ENCODE measurements at regions of chr15 and their contacts with region 1.

Region 1: DNA sequence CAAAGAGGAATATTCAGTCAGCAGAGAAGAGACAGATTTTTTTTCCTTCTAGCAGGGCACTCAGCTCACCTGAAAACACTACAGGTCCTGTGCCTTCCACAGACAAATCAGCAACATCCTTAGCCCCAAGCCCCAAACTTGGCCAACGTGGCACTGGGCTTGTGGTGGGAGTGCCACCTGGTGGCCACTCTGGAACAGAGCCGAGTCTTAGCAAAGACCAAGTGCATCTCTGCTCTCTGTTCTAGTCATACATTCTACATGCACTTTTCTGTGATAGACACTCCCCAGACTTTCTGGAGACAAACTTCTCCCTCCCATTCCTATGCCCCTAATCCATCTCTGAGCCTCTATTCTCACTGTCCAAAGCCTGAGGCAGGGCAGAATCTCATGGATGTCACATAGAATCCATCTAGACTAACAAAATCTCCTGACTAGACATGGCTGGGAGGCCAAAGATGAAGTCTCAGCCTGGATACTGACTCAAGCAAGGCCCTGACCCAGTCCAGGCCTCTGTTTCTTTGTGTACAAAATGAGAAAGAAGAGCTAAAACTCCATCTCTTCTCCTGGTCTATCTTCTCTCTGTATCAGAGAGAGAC is 5.1 kb upstream of the SEMA7A start:
- DNase-seq: peak; percentile 62 to 84 (median 65)
- H3K4me3 ChIP-seq: no peak overlapping the region
- H3K4me3 Mint-ChIP-seq: peak overlapping the region in 1 of 7 donors; percentile 71
- H3K27ac ChIP-seq: no peak overlapping the region
- H3K27ac Mint-ChIP-seq: peak overlapping the region in 4 of 8 donors; percentile 7 to 64 (median 27)
- H3K4me1 ChIP-seq: peaks cover 12% of the 10 kb centered on the region
- H3K4me1 Mint-ChIP-seq: peaks cover 14 to 26% (median 19%) of the 10 kb centered on the region in 3 donors
- H3K27me3 ChIP-seq: no peaks in the 10 kb centered on the region
- H3K27me3 Mint-ChIP-seq: no peaks in the 10 kb centered on the region

Region 2: GRCh38 chr15:74373731-74374647 is 64.8 kb before region 1 on chr15:
- CTCF ChIA-PET with region 1: interaction called, 37 read pairs
- POLR2A ChIA-PET with region 1: interaction called, 3 read pairs
- DNase-seq: peak; percentile 88 to 97 (median 93)
- H3K4me3 ChIP-seq: peak overlapping the region; percentile 85
- H3K4me3 Mint-ChIP-seq: peak overlapping the region; percentile 66 to 95 (median 82)
- H3K27ac ChIP-seq: peak overlapping the region; percentile 54
- H3K27ac Mint-ChIP-seq: peak overlapping the region; percentile 53 to 87 (median 75)
- H3K4me1 ChIP-seq: peaks cover 10% of the 10 kb centered on the region
- H3K4me1 Mint-ChIP-seq: peaks cover 11 to 15% (median 13%) of the 10 kb centered on the region in 3 donors
- H3K27me3 ChIP-seq: no peaks in the 10 kb centered on the region
- H3K27me3 Mint-ChIP-seq: peaks cover 5 to 15% of the 10 kb centered on the region in 2 donors

Region 3: GRCh38 chr15:74382004-74382816 is 56.6 kb before region 1 on chr15:
- CTCF ChIA-PET with region 1: interaction called, 163 read pairs
- POLR2A ChIA-PET with region 1: interaction called, 5 read pairs
- DNase-seq: peak; percentile 67 to 83 (median 74)
- H3K4me3 ChIP-seq: no peak overlapping the region
- H3K4me3 Mint-ChIP-seq: no peak overlapping the region
- H3K27ac ChIP-seq: no peak overlapping the region
- H3K27ac Mint-ChIP-seq: peak overlapping the region in 6 of 8 donors; percentile 4 to 87 (median 66)
- H3K4me1 ChIP-seq: peaks cover 36% of the 10 kb centered on the region
- H3K4me1 Mint-ChIP-seq: peaks cover 23 to 37% (median 26%) of the 10 kb centered on the region in 3 donors
- H3K27me3 ChIP-seq: no peaks in the 10 kb centered on the region
- H3K27me3 Mint-ChIP-seq: peaks cover 0 to 3% of the 10 kb centered on the region in 2 donors

Region 4: GRCh38 chr15:74402873-74403587 is 35.8 kb before region 1 on chr15:
- CTCF ChIA-PET with region 1: interaction called, 10 read pairs
- POLR2A ChIA-PET with region 1: interaction called, 5 read pairs
- DNase-seq: peak; percentile 30 to 73 (median 46)
- H3K4me3 ChIP-seq: peak overlapping the region; percentile 11
- H3K4me3 Mint-ChIP-seq: peak overlapping the region in 6 of 7 donors; percentile 12 to 78 (median 64)
- H3K27ac ChIP-seq: peak overlapping the region; percentile 39
- H3K27ac Mint-ChIP-seq: peak overlapping the region; percentile 61 to 96 (median 81)
- H3K4me1 ChIP-seq: peaks cover 51% of the 10 kb centered on the region
- H3K4me1 Mint-ChIP-seq: peaks cover 69 to 76% (median 71%) of the 10 kb centered on the region in 3 donors
- H3K27me3 ChIP-seq: no peaks in the 10 kb centered on the region
- H3K27me3 Mint-ChIP-seq: peaks cover 0 to 1% of the 10 kb centered on the region in 2 donors

Region 5: GRCh38 chr15:74411691-74412558 is 26.9 kb before region 1 on chr15:
- CTCF ChIA-PET with region 1: interaction called, 13 read pairs
- POLR2A ChIA-PET with region 1: no interaction called
- DNase-seq: no peak
- H3K4me3 ChIP-seq: no peak overlapping the region
- H3K4me3 Mint-ChIP-seq: no peak overlapping the region
- H3K27ac ChIP-seq: no peak overlapping the region
- H3K27ac Mint-ChIP-seq: peak overlapping the region in 3 of 8 donors; percentile 31 to 55 (median 36)
- H3K4me1 ChIP-seq: no peaks in the 10 kb centered on the region
- H3K4me1 Mint-ChIP-seq: peaks cover 10 to 19% (median 10%) of the 10 kb centered on the region in 3 donors
- H3K27me3 ChIP-seq: no peaks in the 10 kb centered on the region
- H3K27me3 Mint-ChIP-seq: peaks cover 0 to 3% of the 10 kb centered on the region in 2 donors

Region 6: GRCh38 chr15:74449643-74450205 is 10.9 kb after region 1 on chr15:
- CTCF ChIA-PET with region 1: interaction called, 16 read pairs
- POLR2A ChIA-PET with region 1: interaction called, 3 read pairs
- DNase-seq: no peak
- H3K4me3 ChIP-seq: no peak overlapping the region
- H3K4me3 Mint-ChIP-seq: no peak overlapping the region
- H3K27ac ChIP-seq: no peak overlapping the region
- H3K27ac Mint-ChIP-seq: no peak overlapping the region
- H3K4me1 ChIP-seq: no peaks in the 10 kb centered on the region
- H3K4me1 Mint-ChIP-seq: peaks cover 10 to 21% (median 17%) of the 10 kb centered on the region in 3 donors
- H3K27me3 ChIP-seq: no peaks in the 10 kb centered on the region
- H3K27me3 Mint-ChIP-seq: no peaks in the 10 kb centered on the region

Region 7: DNA sequence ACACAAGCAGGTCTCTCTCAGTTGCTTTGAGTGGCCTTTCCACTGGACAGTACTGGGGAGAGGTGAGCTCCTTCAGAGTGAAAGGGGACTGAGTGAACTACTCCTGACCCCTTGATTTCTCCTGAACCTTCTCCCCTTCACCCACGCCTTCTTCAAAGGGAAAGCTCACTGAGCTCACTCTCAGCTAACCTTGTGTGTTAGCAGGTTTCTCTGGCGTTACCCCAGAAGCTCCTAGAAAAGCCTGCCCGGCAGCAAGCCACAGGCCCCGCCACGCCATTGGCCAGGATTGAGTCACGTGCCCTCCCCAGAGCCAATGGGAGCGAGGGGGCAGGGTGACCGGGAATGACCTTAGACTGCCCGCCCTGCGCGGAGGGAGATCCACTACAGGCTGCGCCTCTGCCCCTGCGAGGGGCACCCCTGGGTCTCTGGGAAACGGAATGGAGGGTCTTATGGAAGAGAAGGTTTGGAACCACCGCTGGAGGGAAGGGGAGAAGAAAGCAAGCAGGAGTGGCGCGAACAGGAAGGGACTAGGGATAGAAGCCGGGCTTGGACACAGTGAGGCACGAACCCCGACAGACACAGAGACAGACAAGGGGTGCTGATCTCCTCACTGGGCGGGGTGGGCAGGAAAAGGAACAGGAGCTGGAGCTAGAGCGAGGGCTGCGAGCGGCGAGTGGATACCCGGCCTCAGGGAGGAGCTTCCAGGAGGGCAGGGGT is 159.5 kb after region 1 on chr15:
- CTCF ChIA-PET with region 1: no interaction called
- POLR2A ChIA-PET with region 1: no interaction called
- DNase-seq: peak; percentile 78 to 89 (median 84)
- H3K4me3 ChIP-seq: peak overlapping the region; percentile 93
- H3K4me3 Mint-ChIP-seq: peak overlapping the region; percentile 89 to 100 (median 97)
- H3K27ac ChIP-seq: peak overlapping the region; percentile 83
- H3K27ac Mint-ChIP-seq: peak overlapping the region; percentile 73 to 100 (median 99)
- H3K4me1 ChIP-seq: peaks cover 20% of the 10 kb centered on the region
- H3K4me1 Mint-ChIP-seq: peaks cover 19 to 21% (median 20%) of the 10 kb centered on the region in 3 donors
- H3K27me3 ChIP-seq: no peaks in the 10 kb centered on the region
- H3K27me3 Mint-ChIP-seq: no peaks in the 10 kb centered on the region

Measured in CD8-positive, alpha-beta memory T cell (primary cell).